ENCODE measurements at regions of chr1 and their contacts with region 1.

Region 1: GRCh38 chr1:115609021-115609420 is 32.7 kb upstream of the VANGL1 start:
- DNase-seq: no peak
- H3K4me3 Mint-ChIP-seq: no peak overlapping the region
- H3K27ac Mint-ChIP-seq: no peak overlapping the region
- H3K4me1 Mint-ChIP-seq: peaks cover 15% of the 10 kb centered on the region
- H3K27me3 Mint-ChIP-seq: no peaks in the 10 kb centered on the region
- CTCF ChIP-seq: no peak

Region 2: GRCh38 chr1:115506926-115507589 is 102.0 kb before region 1 on chr1:
- CTCF ChIA-PET with region 1: no interaction called
- intact Hi-C with region 1: no loop called
- DNase-seq: peak; percentile 14
- H3K4me3 Mint-ChIP-seq: no peak overlapping the region
- H3K27ac Mint-ChIP-seq: no peak overlapping the region
- H3K4me1 Mint-ChIP-seq: no peaks in the 10 kb centered on the region
- H3K27me3 Mint-ChIP-seq: no peaks in the 10 kb centered on the region
- CTCF ChIP-seq: peak; percentile 39

Region 3: DNA sequence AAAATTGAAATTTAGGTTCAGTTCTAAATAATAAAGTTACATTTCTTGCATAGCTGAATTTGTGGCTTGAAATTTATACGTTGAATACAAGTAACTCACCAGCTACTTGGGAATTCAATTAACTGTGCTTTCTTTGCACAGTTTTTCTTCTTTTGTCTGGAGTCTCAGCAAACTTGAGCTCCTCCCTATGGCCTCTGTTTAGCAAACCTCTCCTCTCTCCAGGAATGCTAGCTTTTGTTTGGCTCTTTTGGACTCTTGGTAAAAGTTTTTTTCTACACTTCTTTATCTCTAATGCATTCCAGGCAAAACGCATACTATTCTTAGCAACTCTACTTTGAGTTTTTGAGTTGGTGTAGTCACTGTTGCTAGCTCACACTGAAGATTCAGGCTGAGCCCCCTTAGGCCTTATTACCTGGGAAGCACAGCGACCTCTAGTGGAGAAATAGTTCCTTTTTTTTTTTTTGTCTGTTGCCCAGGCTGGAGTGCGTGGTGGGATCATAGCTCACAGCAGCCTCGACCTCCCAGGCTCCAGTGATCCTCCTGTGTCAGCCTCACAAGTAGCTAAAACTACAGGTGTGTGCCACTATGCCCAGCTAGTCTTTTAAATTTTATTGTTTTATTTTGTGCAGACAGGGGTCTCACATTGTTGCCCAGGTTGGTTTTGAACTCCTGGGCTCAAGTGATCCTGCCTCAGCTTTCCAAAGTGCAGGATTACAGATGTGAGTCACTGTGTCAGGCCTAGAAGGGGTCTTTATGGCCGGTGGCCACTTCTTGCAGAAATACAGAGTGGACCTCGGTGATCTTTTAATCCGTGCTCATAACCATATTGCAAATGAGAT is 97.8 kb after region 1 on chr1:
- CTCF ChIA-PET with region 1: interaction called, 18 read pairs
- intact Hi-C with region 1: loop called (anchors 2 kb)
- DNase-seq: no peak
- H3K4me3 Mint-ChIP-seq: no peak overlapping the region
- H3K27ac Mint-ChIP-seq: no peak overlapping the region
- H3K4me1 Mint-ChIP-seq: peaks cover 7% of the 10 kb centered on the region
- H3K27me3 Mint-ChIP-seq: no peaks in the 10 kb centered on the region
- CTCF ChIP-seq: peak; percentile 27

Region 4: DNA sequence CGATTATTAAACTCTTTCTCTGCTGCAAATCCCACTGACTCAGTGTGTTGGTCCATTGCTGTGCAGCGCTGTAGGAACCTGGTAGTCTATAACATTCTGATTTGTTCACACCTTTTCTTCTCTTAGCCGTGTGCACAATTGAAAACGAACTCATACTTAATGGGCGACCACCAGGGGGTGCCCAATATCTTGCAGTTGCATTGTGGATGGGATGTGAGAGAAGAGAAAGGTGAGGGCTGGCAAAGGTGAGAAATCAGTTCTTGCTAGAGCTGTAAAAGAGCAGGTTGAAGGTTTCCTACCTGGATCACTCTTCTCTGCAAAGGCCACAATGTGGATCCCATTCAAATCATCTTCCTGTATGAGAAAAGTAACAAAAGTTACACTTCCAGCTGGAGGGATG is 108.5 kb after region 1 on chr1:
- CTCF ChIA-PET with region 1: interaction called, 10 read pairs
- intact Hi-C with region 1: loop called (anchors 2 kb)
- DNase-seq: peak; percentile 70
- H3K4me3 Mint-ChIP-seq: no peak overlapping the region
- H3K27ac Mint-ChIP-seq: peak overlapping the region; percentile 69
- H3K4me1 Mint-ChIP-seq: peaks cover 35% of the 10 kb centered on the region
- H3K27me3 Mint-ChIP-seq: no peaks in the 10 kb centered on the region
- CTCF ChIP-seq: peak; percentile 18

Region 5: DNA sequence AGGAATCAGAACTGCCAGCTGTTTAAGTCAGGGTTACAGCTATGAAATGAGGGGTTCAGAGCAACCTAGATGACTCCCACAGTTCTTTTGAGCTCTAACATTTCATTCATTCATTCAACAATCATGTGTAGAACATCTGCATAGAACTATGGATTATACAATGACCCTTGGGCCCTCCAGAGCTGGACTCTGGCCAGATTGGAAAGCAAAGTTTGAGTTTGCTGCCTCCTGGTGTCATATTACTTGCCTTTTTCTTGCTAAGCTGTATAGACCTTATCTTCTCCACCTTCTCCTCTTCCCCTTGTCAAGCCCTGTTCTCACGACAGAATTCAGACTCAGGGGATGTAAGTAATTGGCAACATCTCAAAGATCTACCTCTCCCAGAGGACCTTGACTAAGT is 155.5 kb after region 1 on chr1:
- CTCF ChIA-PET with region 1: interaction called, 31 read pairs
- intact Hi-C with region 1: loop called (anchors 1 kb)
- DNase-seq: peak; percentile 64
- H3K4me3 Mint-ChIP-seq: no peak overlapping the region
- H3K27ac Mint-ChIP-seq: no peak overlapping the region
- H3K4me1 Mint-ChIP-seq: peaks cover 33% of the 10 kb centered on the region
- H3K27me3 Mint-ChIP-seq: no peaks in the 10 kb centered on the region
- CTCF ChIP-seq: no peak

Region 6: DNA sequence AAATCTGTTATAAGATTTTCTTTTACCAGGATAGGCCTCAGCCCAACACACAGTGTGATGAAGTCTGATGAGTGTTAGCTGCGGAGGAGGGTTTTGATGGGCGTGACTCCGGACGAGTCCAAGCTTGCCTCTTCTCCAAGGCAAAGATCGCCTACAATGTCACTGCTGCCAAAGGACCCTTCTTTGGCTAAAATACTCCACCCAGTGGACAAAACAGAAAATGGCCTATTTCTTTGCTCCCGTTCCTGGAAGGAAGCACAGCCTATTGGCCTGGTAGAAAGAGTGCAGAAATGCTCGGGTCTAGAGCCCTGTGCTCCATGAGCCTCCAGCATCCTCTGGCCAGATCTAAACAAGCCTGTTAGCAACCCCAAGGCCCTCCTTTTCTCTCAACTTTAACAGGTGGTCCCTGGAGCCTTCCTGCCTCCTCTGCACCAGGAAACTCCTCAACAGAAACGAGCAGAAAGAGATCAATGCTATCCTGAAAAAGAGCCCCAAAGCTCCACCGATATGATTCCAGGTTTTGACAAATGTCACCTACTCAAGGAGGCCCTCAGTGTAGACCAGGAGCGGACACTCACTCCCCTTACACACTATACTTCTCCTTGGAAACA is 162.9 kb after region 1 on chr1:
- CTCF ChIA-PET with region 1: interaction called, 11 read pairs
- intact Hi-C with region 1: no loop called
- DNase-seq: peak; percentile 58
- H3K4me3 Mint-ChIP-seq: no peak overlapping the region
- H3K27ac Mint-ChIP-seq: no peak overlapping the region
- H3K4me1 Mint-ChIP-seq: no peaks in the 10 kb centered on the region
- H3K27me3 Mint-ChIP-seq: no peaks in the 10 kb centered on the region
- CTCF ChIP-seq: peak; percentile 47